ENCODE measurements at regions of chr15 and their contacts with region 1.

Region 1: DNA sequence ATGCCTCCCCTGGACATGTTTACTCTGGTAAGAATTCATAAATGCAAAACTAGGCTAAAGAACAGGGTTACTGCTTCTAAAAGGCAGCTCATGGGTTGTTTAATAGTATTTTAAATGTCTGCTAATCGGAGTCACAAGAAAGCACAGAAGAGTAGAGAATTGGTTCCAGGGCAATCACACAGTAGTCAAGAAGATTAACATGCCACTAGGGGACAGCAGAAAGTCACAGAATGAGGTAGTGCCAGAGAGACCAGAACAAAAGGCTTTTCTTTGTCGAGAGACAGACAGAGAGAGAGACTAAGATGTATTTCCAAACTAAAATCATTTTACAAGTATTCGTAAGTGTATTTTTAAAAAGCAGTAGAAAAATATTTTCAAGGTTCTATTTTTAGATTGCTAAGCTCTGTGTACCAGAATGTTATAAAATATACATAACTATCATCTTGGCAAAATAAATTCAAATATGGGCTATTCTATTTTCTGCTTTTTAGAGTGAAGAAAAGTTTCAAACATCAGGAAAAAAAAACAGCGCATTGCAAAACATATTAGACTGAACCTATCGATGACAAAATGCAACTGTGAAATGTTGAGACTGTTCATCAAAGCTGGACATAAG is 78.3 kb upstream of the CDIN1 start:
- DNase-seq: peak in 1 of 2 donors; percentile 60
- ATAC-seq: peak; percentile 85 to 96 (median 92)
- H3K4me3 ChIP-seq: peak overlapping the region in 1 of 10 donors; percentile 3
- H3K27ac ChIP-seq: peak overlapping the region in 3 of 10 donors; percentile 0 to 21 (median 4)
- H3K4me1 ChIP-seq: peaks cover 0 to 41% (median 6%) of the 10 kb centered on the region in 9 donors
- H3K27me3 ChIP-seq: no peaks in the 10 kb centered on the region
- CTCF ChIP-seq: peak; percentile 44 to 89 (median 71)

Region 2: DNA sequence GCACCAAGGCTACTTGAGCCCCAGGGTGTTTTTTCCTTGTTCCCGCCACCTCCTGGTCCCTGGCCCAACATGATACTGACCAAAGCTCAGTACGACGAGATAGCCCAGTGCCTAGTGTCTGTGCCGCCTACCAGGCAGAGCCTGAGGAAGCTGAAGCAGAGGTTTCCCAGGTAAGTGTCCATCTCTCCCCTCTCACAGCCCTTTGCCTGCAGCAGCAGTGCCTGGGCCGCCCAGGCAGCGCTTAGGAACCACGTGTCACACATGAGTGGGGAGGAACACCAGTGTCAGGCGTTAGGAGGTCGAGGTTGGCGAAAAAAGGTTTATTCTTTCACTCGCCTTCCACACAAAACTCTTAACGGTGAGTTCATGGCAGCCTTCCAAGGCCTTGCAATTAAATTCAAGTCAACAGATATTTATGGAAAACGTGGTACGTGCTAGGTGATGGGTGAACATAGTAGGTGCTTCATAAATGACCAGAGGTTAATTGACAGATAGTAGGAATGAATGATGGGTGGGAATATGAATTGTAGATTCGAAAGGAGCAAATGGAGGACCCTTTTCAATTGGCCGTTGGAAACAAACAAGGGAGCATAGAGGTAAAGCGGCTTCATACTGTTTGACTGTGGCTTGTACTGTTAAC is 78.7 kb after region 1 on chr15:
- intact Hi-C with region 1: loop called in 1 of 10 experiments (anchors 10 kb)
- DNase-seq: peak in 1 of 2 donors; percentile 24
- ATAC-seq: peak; percentile 19 to 67 (median 50)
- H3K4me3 ChIP-seq: peak overlapping the region; percentile 52 to 98 (median 72)
- H3K27ac ChIP-seq: peak overlapping the region; percentile 67 to 97 (median 88)
- H3K4me1 ChIP-seq: peaks cover 0 to 48% (median 17%) of the 10 kb centered on the region in 9 donors
- H3K27me3 ChIP-seq: no peaks in the 10 kb centered on the region
- CTCF ChIP-seq: no peak

Region 3: DNA sequence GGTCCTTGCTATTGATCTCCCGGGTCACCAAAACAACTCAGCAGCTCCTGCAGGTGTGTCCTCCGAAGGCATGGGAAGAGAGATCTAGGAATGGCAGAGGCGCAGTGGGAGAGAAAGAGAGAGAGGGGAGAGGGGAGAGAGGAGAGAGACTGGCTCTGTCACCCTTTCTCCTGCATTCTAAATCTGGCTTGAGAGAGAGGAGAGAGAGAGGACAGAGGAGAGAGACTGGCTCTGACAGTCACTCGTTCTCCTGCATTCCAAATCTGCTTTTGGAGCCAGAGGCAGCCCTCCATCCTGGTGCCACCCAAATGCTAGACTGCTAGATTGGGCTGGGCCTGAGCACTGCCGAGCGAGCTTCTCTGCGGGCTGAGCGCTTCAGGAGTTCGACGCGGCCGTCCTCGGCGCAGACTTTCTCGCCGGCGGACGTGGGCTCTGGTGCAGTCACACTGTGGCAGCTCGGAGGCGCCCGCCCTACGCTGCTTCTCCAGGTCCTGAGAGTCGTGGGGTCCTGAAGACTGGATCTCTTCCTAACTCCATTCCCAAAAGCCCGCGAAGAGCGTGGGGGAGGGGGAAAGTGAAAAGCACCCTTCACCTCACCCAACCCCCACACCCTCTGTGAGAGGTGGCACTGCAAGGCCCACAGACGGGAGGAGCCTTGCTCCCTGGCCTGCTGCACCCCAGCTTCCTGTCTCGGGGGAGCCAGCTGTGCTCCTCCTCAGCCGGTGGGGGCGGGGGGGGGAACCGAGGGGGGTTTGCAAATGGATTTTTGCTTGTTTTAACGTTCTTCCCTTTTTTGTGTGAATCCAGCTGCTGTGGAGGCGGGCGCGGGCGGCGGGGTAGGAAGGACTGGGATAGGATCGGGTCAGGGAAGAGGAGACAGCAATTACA is 376.9 kb after region 1 on chr15:
- intact Hi-C with region 1: loop called in 2 of 10 experiments (anchors 10 kb)
- DNase-seq: peak in 1 of 2 donors; percentile 28
- ATAC-seq: peak; percentile 50 to 76 (median 70)
- H3K4me3 ChIP-seq: peak overlapping the region in 9 of 10 donors; percentile 25 to 46 (median 42)
- H3K27ac ChIP-seq: peak overlapping the region in 6 of 10 donors; percentile 29 to 62 (median 38)
- H3K4me1 ChIP-seq: peaks cover 0 to 14% (median 7%) of the 10 kb centered on the region in 9 donors
- H3K27me3 ChIP-seq: peaks cover 0 to 92% (median 36%) of the 10 kb centered on the region in 7 donors
- CTCF ChIP-seq: peak in 1 of 9 donors; percentile 22

Region 4: GRCh38 chr15:37106490-37107001 is 605.4 kb after region 1 on chr15:
- intact Hi-C with region 1: loop called in 2 of 10 experiments (anchors 5 to 10 kb)
- DNase-seq: peak; percentile 63 to 67
- ATAC-seq: no peak
- H3K4me3 ChIP-seq: peak overlapping the region in 9 of 10 donors; percentile 14 to 48 (median 42)
- H3K27ac ChIP-seq: peak overlapping the region; percentile 7 to 97 (median 77)
- H3K4me1 ChIP-seq: peaks cover 0 to 25% (median 13%) of the 10 kb centered on the region in 9 donors
- H3K27me3 ChIP-seq: peaks cover 0 to 100% (median 58%) of the 10 kb centered on the region in 7 donors
- CTCF ChIP-seq: peak in 7 of 9 donors; percentile 5 to 55 (median 44)